HepG2 (cell line): ENCODE measurements at regions of chr16 and their contacts with region 1.

Region 1: GRCh38 chr16:19142939-19143598 is 25.0 kb upstream of the SYT17 start:
- DNase-seq: no peak
- ATAC-seq: no peak
- H3K4me3 ChIP-seq: no peak overlapping the region
- H3K27ac ChIP-seq: no peak overlapping the region
- H3K4me1 ChIP-seq: no peaks in the 10 kb centered on the region
- H3K27me3 ChIP-seq: peaks cover 2 to 48% of the 10 kb centered on the region in 2 experiments; a peak in 3 of 5 replicates
- CTCF ChIP-seq: no peak
- EP300 ChIP-seq: no peak
- POLR2A ChIP-seq: no peak
- RAD21 ChIP-seq: no peak

Region 2: GRCh38 chr16:19203374-19204031 is 60.4 kb after region 1 on chr16:
- CTCF ChIA-PET with region 1: no interaction called
- POLR2A ChIA-PET with region 1: no interaction called
- in situ Hi-C with region 1: loop called (anchors 10 kb)
- intact Hi-C with region 1: no loop called
- DNase-seq: no peak
- ATAC-seq: no peak
- H3K4me3 ChIP-seq: no peak overlapping the region
- H3K27ac ChIP-seq: no peak overlapping the region
- H3K4me1 ChIP-seq: no peaks in the 10 kb centered on the region
- H3K27me3 ChIP-seq: peaks cover 0 to 2% of the 10 kb centered on the region in 2 experiments; a peak in 1 of 5 replicates
- CTCF ChIP-seq: no peak
- EP300 ChIP-seq: no peak
- POLR2A ChIP-seq: no peak
- RAD21 ChIP-seq: no peak